BJ (cell line): ENCODE measurements at regions of chr20 and their contacts with region 1.

Region 1: DNA sequence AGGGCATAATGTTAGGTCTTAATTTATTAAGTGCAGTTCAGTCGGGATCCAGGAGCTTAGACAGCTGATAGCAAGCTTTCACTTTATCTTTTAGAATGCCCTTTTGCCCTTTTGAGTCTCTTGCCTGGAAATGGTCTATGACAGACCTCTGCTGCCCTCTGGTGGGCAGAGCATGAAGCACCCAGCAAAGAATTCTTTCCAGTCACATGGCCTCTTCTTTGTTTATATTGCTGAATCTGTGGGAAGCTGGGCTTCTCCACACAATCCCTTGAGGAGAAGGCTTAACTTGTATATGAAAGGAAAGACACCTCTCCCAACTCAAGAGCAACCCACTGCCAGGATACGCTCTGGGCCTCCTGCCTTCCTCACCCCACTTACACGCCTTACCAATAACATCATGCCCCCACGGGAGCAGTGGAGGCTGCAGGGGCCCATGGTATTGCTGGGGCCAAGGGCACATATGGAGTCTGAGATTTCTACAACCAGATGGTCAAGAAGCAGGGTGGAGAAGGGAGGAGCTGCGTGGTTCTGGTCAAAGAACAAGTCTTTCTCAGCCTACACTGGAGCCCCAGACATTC is 20.4 kb downstream of the WFDC3 start:
- DNase-seq: no peak
- H3K4me3 ChIP-seq: no peak overlapping the region
- H3K27me3 ChIP-seq: peaks cover 18% of the 10 kb centered on the region
- CTCF ChIP-seq: peak; percentile 90

Region 2: GRCh38 chr20:45311589-45312211 is 459.6 kb before region 1 on chr20:
- CTCF ChIA-PET with region 1: interaction called, 18 read pairs
- POLR2A ChIA-PET with region 1: no interaction called
- DNase-seq: no peak
- H3K4me3 ChIP-seq: no peak overlapping the region
- H3K27me3 ChIP-seq: peaks cover 12% of the 10 kb centered on the region
- CTCF ChIP-seq: peak; percentile 92

Region 3: DNA sequence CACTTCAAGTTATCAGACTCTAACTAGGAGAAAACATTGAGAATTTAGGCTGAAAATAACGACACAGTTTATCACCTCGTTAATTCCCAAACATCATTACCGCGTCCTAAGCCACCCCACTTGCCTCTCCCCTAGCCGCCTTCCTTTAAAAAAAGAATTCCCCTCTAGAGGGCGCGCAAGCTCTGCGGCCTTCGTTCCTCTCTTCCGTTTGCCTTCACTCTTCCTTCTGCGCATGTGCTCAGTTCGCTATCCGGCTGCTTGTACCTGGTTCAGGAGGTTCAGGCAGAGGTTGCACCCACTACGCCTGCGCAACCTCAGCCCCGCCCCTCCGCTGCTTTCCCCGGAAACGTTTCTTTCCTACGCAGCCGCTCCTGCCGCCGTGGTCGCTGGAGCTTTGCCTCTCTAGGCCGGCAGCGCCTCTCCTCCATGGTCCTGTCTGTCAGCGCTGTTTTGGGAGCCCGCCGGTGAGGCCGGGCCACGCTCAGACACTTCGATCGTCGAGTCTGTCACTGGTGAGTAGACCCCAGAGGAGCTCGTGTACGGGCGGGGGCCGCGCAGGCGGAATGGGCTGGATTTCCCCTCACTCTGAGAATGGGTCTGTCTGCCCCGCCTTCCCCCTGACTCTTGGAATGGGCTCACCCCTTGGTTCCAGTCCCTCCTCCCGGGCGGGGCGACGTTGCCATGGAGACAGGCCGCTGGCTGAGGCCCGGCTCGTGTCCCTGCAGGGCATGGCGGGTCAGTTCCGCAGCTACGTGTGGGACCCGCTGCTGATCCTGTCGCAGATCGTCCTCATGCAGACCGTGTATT is 408.3 kb before region 1 on chr20 and contains the start of gene SYS1:
- CTCF ChIA-PET with region 1: interaction called, 17 read pairs
- POLR2A ChIA-PET with region 1: no interaction called
- DNase-seq: peak; percentile 94
- H3K4me3 ChIP-seq: peak within 1 kb of the TSS; percentile 89
- H3K27me3 ChIP-seq: no peaks in the 10 kb centered on the region
- CTCF ChIP-seq: peak; percentile 92
- polyA plus RNA-seq, gene SYS1: 38.8 and 71.4 TPM in 2 replicates

Region 4: DNA sequence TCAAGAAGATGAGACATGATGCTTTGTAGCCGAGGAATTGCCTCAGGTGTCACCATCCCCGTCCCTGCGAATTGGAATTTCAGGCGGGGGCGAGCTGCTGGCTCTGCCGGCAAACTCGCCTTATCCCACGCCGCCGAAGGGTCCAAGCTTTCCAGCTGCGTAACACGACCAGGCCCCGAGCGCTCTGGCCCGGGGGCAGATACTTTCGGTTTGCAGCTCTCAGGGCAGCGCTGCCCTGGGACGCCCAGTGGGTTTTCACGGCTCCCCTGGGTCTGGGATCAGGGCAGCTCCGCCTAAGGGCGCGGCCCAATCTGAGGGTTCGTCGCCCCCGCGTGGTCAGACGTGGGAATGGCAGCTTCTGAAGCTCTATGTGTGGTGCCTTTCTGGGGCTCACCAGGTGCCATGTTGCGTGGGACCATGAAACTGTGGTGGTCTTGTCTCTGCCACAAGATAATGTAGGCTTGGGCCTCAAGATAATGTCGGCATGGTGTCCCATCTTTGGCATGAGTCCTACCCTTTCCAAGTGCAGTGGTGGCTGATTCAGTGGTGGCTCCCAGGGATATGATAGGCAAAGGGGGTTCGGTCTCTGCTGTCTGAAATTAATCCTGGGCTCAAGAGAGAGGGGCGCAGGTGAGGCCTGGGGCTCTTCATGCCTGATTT is 334.4 kb before region 1 on chr20:
- CTCF ChIA-PET with region 1: interaction called, 20 read pairs
- POLR2A ChIA-PET with region 1: no interaction called
- DNase-seq: no peak
- H3K4me3 ChIP-seq: peak overlapping the region; percentile 45
- H3K27me3 ChIP-seq: no peaks in the 10 kb centered on the region
- CTCF ChIP-seq: peak; percentile 96

Region 5: GRCh38 chr20:45538209-45538799 is 233.0 kb before region 1 on chr20:
- CTCF ChIA-PET with region 1: interaction called, 12 read pairs
- POLR2A ChIA-PET with region 1: no interaction called
- DNase-seq: no peak
- H3K4me3 ChIP-seq: no peak overlapping the region
- H3K27me3 ChIP-seq: peaks cover 2% of the 10 kb centered on the region; the same call in 1 of the 2 replicates
- CTCF ChIP-seq: no peak

Region 6: GRCh38 chr20:45592574-45593189 is 178.6 kb before region 1 on chr20:
- CTCF ChIA-PET with region 1: interaction called, 38 read pairs
- POLR2A ChIA-PET with region 1: no interaction called
- DNase-seq: no peak
- H3K4me3 ChIP-seq: no peak overlapping the region
- H3K27me3 ChIP-seq: 0 out of 2 replicates have a peak, but pooled peaks cover 1% of the 10 kb centered on the region
- CTCF ChIP-seq: peak; percentile 60

Region 7: DNA sequence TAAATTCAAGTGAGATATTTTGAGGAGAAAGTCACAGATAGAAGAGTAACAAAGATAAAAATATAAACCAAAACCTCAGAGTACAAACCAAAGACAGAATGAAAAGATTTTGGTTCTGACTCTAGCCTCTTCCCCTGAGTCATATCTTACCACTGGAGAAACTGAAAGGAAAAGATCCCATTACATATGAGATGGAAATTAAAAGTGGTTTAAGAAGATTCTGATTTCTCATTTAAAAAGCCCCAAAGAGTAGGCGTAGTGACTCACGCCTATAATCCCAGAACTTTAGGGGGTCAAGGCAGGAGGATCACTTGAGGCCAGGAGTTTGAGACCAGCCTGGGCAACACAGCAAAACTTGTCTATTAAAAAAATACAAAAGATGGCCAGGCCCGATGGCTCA is 18.5 kb before region 1 on chr20:
- CTCF ChIA-PET with region 1: interaction called, 11 read pairs
- POLR2A ChIA-PET with region 1: no interaction called
- DNase-seq: no peak
- H3K4me3 ChIP-seq: no peak overlapping the region
- H3K27me3 ChIP-seq: no peaks in the 10 kb centered on the region
- CTCF ChIP-seq: no peak

Region 8: GRCh38 chr20:45810191-45810970 is 39.1 kb after region 1 on chr20:
- CTCF ChIA-PET with region 1: no interaction called
- POLR2A ChIA-PET with region 1: no interaction called
- DNase-seq: no peak
- H3K4me3 ChIP-seq: no peak overlapping the region
- H3K27me3 ChIP-seq: no peaks in the 10 kb centered on the region
- CTCF ChIP-seq: no peak